ENCODE measurements at regions of chr22 and their contacts with region 1.

Region 1: DNA sequence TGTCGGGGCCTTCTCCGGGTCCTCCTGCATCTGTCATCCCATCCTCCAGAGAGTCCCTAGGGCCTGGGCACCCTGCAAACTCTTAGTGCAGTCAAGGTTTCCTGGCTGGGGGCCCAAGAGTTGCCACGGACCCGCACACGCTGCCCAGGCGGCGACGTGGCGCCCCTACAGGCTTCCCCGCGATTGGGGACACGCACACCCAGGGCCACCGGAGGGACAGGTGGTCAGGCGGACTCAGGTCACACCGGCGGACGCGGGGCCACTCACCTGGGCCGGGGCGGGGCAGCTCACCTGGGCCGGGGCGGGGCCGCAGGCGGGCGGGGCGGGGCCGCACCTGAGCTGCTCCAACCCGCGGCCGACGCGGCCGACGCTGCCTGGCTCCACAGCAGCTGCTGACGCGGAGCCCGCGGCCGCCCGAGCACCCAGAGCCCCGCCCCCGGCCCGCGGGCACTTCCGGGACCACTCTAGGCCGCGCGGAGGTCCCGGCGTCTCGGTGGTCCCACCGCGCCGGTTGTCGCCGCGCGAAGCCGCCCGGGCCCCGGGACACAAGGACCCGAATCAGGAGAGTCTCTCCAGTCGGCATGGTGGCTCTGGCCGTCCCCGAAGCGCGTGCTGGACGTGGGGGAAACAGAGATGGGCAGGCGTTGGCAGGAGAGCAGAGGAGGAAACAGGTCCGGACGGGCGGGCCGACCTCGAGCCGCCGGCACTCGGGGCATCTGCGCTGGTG is at the start of gene ZNF70:
- DNase-seq: peak; percentile 78 to 86
- ATAC-seq: peak; percentile 89 to 96 (median 94)
- H3K4me3 ChIP-seq: peak within 1 kb of the TSS; percentile 30 to 96 (median 76)
- H3K27ac ChIP-seq: peak within 1 kb of the TSS; percentile 19 to 96 (median 90)
- H3K4me1 ChIP-seq: peaks cover 6 to 25% (median 12%) of the 10 kb centered on the region in 9 donors
- H3K27me3 ChIP-seq: no peaks in the 10 kb centered on the region
- CTCF ChIP-seq: peak in 3 of 9 donors; percentile 30 to 39 (median 33)
- total RNA-seq, gene ZNF70: 3.0 to 4.2 (median 3.6) TPM

Region 2: DNA sequence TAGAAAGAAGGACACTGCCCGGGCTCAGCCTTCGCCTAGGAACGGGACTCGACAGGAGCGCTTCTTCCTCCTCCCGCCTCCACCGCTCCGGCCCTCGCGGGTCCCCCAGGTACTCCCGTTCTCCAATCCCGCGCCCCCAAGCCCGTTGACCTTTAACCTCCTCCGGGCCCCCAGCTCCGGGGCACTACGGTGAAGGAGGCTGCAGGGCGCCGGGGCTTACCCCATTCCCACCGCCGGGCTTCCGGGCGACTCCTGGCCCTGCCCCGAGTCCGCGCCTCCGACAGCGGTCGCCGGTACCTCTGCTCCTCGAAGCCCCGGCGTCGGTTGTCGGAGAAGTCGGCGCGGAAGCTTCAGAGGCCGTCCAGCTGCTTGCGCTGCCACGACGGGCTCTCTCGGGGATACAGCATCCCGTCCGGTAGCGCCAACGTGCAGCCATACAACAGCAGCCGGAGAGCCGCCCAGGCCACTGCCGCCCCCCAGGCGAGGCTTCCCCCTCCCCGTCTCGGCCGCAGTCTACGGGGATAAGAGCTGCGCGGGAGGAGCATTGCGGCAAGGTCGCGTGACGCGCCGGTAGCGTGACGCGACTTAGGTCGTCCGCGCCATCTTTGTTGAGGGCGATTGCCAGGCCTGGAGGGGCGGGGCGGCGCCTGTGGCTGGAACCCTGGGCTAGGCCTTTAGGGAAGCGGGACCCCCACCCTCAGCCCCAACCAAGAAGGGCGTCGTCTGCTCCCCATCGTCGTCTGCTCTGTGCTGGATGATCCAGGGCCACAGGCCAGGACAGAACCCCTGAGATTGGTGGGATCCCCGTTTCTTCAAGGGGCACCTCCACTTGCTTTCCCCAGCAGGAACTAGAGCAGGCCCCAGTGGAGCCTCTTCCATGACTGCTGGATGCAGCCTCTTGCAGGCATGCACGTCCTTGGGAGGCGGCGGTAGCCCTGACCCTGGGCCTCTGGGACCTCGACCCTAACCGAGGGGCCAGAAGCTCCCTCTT is 33.8 kb before region 1 on chr22:
- intact Hi-C with region 1: loop called in 1 of 10 experiments (anchors 2 kb)
- DNase-seq: peak; percentile 85 to 90
- ATAC-seq: peak; percentile 93 to 98 (median 97)
- H3K4me3 ChIP-seq: peak overlapping the region; percentile 54 to 91 (median 78)
- H3K27ac ChIP-seq: peak overlapping the region; percentile 23 to 84 (median 68)
- H3K4me1 ChIP-seq: peaks cover 0 to 22% (median 13%) of the 10 kb centered on the region in 9 donors
- H3K27me3 ChIP-seq: no peaks in the 10 kb centered on the region
- CTCF ChIP-seq: peak in 1 of 9 donors; percentile 5